Endothelial cell of umbilical vein (primary cell): ENCODE measurements at regions of chr13 and their contacts with region 1.

Region 1: GRCh38 chr13:75135325-75135825 is 346.6 kb downstream of the TBC1D4 start:
- DNase-seq: peak; percentile 78
- H3K4me3 ChIP-seq: no peak overlapping the region
- H3K27ac ChIP-seq: peak overlapping the region; percentile 52
- H3K4me1 ChIP-seq: peaks cover 7% of the 10 kb centered on the region
- H3K27me3 ChIP-seq: no peaks in the 10 kb centered on the region
- CTCF ChIP-seq: no peak
- POLR2A ChIP-seq: no peak

Region 2: GRCh38 chr13:74871369-74872070 is 263.9 kb before region 1 on chr13:
- CTCF ChIA-PET with region 1: no interaction called
- POLR2A ChIA-PET with region 1: no interaction called
- dilution Hi-C with region 1: no loop called
- intact Hi-C with region 1: loop called (anchors 5 kb)
- DNase-seq: peak; percentile 54
- H3K4me3 ChIP-seq: no peak overlapping the region
- H3K27ac ChIP-seq: peak overlapping the region; percentile 37
- H3K4me1 ChIP-seq: peaks cover 32% of the 10 kb centered on the region
- H3K27me3 ChIP-seq: no peaks in the 10 kb centered on the region
- CTCF ChIP-seq: no peak
- POLR2A ChIP-seq: no peak